Heart left ventricle (tissue), 16 donors: ENCODE measurements at regions of chr2 and their contacts with region 1.

Region 1: GRCh38 chr2:38734299-38735058 is 16.7 kb downstream of the SRSF7 start:
- DNase-seq: peak in 2 of 5 donors; percentile 37 to 45
- ATAC-seq: peak in 2 of 4 donors; percentile 32 to 63
- H3K4me3 ChIP-seq: no peak overlapping the region
- H3K27ac ChIP-seq: peak overlapping the region in 3 of 12 donors; percentile 2 to 54 (median 16)
- H3K4me1 ChIP-seq: peaks cover 0 to 29% (median 11%) of the 10 kb centered on the region in 12 donors
- H3K27me3 ChIP-seq: no peaks in the 10 kb centered on the region
- CTCF ChIP-seq: no peak
- POLR2A ChIP-seq: no peak

Region 2: GRCh38 chr2:38323623-38324022 is 410.9 kb before region 1 on chr2:
- intact Hi-C with region 1: loop called in 6 of 10 experiments (anchors 5 to 10 kb)
- DNase-seq: no peak
- ATAC-seq: no peak
- H3K4me3 ChIP-seq: no peak overlapping the region
- H3K27ac ChIP-seq: no peak overlapping the region
- H3K4me1 ChIP-seq: peaks cover 0 to 23% (median 11%) of the 10 kb centered on the region in 12 donors
- H3K27me3 ChIP-seq: no peaks in the 10 kb centered on the region
- CTCF ChIP-seq: no peak
- POLR2A ChIP-seq: no peak

Region 3: GRCh38 chr2:38535744-38536506 is 198.6 kb before region 1 on chr2:
- intact Hi-C with region 1: loop called in 3 of 10 experiments (anchors 2 to 5 kb)
- DNase-seq: peak; percentile 78 to 93 (median 84)
- ATAC-seq: peak; percentile 91 to 96 (median 94)
- H3K4me3 ChIP-seq: peak overlapping the region in 11 of 12 donors; percentile 28 to 67 (median 51)
- H3K27ac ChIP-seq: peak overlapping the region in 1 of 12 donors; percentile 84
- H3K4me1 ChIP-seq: peaks cover 0 to 11% (median 0%) of the 10 kb centered on the region in 12 donors
- H3K27me3 ChIP-seq: no peaks in the 10 kb centered on the region
- CTCF ChIP-seq: peak; percentile 82 to 97 (median 92)
- POLR2A ChIP-seq: no peak

Region 4: GRCh38 chr2:38818565-38818964 is 84.1 kb after region 1 on chr2:
- intact Hi-C with region 1: no loop called
- DNase-seq: no peak
- ATAC-seq: no peak
- H3K4me3 ChIP-seq: no peak overlapping the region
- H3K27ac ChIP-seq: no peak overlapping the region
- H3K4me1 ChIP-seq: no peaks in the 10 kb centered on the region
- H3K27me3 ChIP-seq: no peaks in the 10 kb centered on the region
- CTCF ChIP-seq: no peak
- POLR2A ChIP-seq: no peak

Region 5: DNA sequence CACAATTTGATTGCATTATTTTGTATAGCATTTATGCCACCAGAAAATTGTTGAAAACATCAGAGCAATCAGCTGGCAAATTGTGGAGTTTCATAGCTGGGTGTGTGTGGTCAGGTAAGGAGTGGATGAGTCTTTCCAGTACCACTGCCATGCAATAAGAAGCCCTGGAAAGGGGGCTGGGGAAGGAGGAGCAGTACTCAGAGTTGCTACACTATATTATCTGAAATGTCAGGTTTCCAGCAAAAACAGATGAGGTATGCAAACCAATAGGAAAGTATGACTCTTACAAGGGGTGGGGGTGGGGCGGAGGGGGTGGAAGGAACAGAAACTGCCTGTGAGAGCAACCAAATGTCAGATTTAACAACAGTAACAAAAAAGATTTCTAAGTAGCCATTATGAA is 274.2 kb after region 1 on chr2:
- intact Hi-C with region 1: no loop called
- DNase-seq: no peak
- ATAC-seq: no peak
- H3K4me3 ChIP-seq: no peak overlapping the region
- H3K27ac ChIP-seq: no peak overlapping the region
- H3K4me1 ChIP-seq: peaks cover 0 to 8% (median 0%) of the 10 kb centered on the region in 12 donors
- H3K27me3 ChIP-seq: no peaks in the 10 kb centered on the region
- CTCF ChIP-seq: no peak
- POLR2A ChIP-seq: no peak